Panc1 (cell line): ENCODE measurements at regions of chr7 and their contacts with region 1.

Region 1: DNA sequence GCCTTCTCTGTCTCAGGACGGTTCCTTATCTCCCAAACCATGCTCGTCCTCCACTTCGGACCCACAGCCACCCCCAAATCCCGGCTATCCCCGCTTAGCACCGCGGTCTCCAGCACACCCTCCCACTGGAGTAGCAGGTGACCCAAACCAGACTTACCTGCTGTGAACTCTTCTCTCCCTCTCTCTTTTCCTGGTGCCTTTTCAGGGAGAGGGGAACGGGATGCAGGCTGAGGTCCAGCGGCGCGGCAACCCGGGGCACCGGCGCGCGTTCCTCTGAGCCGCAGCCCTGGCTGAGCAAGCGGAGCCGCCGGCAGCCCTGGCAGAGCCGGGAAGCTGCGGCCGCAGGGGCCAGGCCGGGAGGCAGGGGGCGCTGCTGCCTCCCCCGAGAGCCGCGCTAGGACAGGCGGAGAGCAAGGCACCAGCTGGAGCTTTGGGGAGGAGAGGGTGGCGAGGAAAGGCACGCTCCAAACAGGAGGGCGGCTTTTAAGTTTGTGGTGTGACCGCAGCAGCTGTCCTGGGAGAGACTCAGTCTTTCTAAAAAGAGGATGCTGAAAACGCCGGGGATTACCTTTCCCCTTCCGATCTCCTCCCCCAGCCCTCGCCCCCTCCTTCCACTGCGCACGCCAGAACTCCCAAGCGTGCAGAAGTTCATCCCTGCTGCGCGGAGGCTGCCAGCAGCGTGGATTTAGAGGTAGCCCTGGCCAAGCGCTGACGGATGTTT is at the start of gene SEMA3D:
- DNase-seq: no peak
- ATAC-seq: peak; percentile 97
- H3K4me3 ChIP-seq: peak within 1 kb of the TSS; percentile 65 to 67
- H3K27ac ChIP-seq: peak within 1 kb of the TSS; percentile 72
- H3K4me1 ChIP-seq: peaks cover 9% of the 10 kb centered on the region
- H3K27me3 ChIP-seq: peaks cover 6% of the 10 kb centered on the region
- CTCF ChIP-seq: peak; percentile 89
- total RNA-seq, gene SEMA3D: 11.5 TPM

Region 2: DNA sequence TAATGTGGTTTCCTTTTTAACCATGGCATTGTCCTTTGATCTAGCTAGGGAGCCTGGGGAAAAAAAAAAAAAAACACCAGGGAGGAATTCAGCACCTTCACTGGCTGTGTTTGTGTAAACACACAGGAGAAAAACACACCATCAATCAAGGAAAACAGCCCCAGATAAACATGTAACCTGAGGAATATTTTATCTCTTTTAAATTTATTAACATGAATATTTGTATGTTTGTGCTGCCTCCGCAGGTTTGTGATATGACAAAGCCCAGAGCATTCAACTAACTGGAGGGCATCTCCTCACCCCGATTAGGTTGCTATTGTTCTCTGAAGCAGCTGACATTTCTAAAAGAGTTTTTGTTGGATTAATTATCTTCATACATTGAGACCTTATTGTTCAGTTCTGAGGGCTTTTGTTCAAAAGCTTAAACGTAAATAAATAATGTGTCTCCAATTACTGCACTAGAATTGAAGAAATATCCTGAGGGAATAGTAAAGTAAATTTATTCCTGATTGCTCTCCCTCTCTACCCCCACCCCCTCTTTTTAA is 1448.3 kb before region 1 on chr7:
- CTCF ChIA-PET with region 1: no interaction called
- POLR2A ChIA-PET with region 1: interaction called, 12 read pairs
- in situ Hi-C with region 1: no loop called
- intact Hi-C with region 1: no loop called
- DNase-seq: no peak
- ATAC-seq: no peak
- H3K4me3 ChIP-seq: no peak overlapping the region
- H3K27ac ChIP-seq: no peak overlapping the region
- H3K4me1 ChIP-seq: no peaks in the 10 kb centered on the region
- H3K27me3 ChIP-seq: no peaks in the 10 kb centered on the region
- CTCF ChIP-seq: no peak

Region 3: GRCh38 chr7:85041605-85042216 is 145.0 kb before region 1 on chr7:
- CTCF ChIA-PET with region 1: no interaction called
- POLR2A ChIA-PET with region 1: no interaction called
- in situ Hi-C with region 1: no loop called
- intact Hi-C with region 1: loop called (anchors 5 kb)
- DNase-seq: peak; percentile 67
- ATAC-seq: peak; percentile 93
- H3K4me3 ChIP-seq: no peak overlapping the region; a peak in 1 of 4 replicates
- H3K27ac ChIP-seq: no peak overlapping the region
- H3K4me1 ChIP-seq: no peaks in the 10 kb centered on the region
- H3K27me3 ChIP-seq: no peaks in the 10 kb centered on the region
- CTCF ChIP-seq: peak; percentile 77

Region 4: GRCh38 chr7:85464042-85464651 is 277.5 kb after region 1 on chr7:
- CTCF ChIA-PET with region 1: no interaction called
- POLR2A ChIA-PET with region 1: no interaction called
- in situ Hi-C with region 1: no loop called
- intact Hi-C with region 1: loop called (anchors 5 kb)
- DNase-seq: no peak
- ATAC-seq: no peak
- H3K4me3 ChIP-seq: no peak overlapping the region
- H3K27ac ChIP-seq: no peak overlapping the region
- H3K4me1 ChIP-seq: no peaks in the 10 kb centered on the region
- H3K27me3 ChIP-seq: no peaks in the 10 kb centered on the region
- CTCF ChIP-seq: peak; percentile 16; the same call in 1 of the 2 replicates

Region 5: GRCh38 chr7:85554236-85555178 is 367.8 kb after region 1 on chr7:
- CTCF ChIA-PET with region 1: no interaction called
- POLR2A ChIA-PET with region 1: no interaction called
- in situ Hi-C with region 1: no loop called
- intact Hi-C with region 1: loop called (anchors 5 kb)
- DNase-seq: peak; percentile 50
- ATAC-seq: peak; percentile 62; the same call in 1 of the 2 replicates
- H3K4me3 ChIP-seq: no peak overlapping the region
- H3K27ac ChIP-seq: no peak overlapping the region
- H3K4me1 ChIP-seq: no peaks in the 10 kb centered on the region
- H3K27me3 ChIP-seq: no peaks in the 10 kb centered on the region
- CTCF ChIP-seq: peak; percentile 69; the same call in 1 of the 2 replicates

Region 6: GRCh38 chr7:85750454-85750949 is 563.8 kb after region 1 on chr7:
- CTCF ChIA-PET with region 1: no interaction called
- POLR2A ChIA-PET with region 1: no interaction called
- in situ Hi-C with region 1: no loop called
- intact Hi-C with region 1: loop called (anchors 10 kb)
- DNase-seq: peak; percentile 39
- ATAC-seq: peak; percentile 87
- H3K4me3 ChIP-seq: no peak overlapping the region
- H3K27ac ChIP-seq: no peak overlapping the region
- H3K4me1 ChIP-seq: no peaks in the 10 kb centered on the region
- H3K27me3 ChIP-seq: no peaks in the 10 kb centered on the region
- CTCF ChIP-seq: peak; percentile 80